ENCODE measurements at regions of chr5 and their contacts with region 1.

Region 1: DNA sequence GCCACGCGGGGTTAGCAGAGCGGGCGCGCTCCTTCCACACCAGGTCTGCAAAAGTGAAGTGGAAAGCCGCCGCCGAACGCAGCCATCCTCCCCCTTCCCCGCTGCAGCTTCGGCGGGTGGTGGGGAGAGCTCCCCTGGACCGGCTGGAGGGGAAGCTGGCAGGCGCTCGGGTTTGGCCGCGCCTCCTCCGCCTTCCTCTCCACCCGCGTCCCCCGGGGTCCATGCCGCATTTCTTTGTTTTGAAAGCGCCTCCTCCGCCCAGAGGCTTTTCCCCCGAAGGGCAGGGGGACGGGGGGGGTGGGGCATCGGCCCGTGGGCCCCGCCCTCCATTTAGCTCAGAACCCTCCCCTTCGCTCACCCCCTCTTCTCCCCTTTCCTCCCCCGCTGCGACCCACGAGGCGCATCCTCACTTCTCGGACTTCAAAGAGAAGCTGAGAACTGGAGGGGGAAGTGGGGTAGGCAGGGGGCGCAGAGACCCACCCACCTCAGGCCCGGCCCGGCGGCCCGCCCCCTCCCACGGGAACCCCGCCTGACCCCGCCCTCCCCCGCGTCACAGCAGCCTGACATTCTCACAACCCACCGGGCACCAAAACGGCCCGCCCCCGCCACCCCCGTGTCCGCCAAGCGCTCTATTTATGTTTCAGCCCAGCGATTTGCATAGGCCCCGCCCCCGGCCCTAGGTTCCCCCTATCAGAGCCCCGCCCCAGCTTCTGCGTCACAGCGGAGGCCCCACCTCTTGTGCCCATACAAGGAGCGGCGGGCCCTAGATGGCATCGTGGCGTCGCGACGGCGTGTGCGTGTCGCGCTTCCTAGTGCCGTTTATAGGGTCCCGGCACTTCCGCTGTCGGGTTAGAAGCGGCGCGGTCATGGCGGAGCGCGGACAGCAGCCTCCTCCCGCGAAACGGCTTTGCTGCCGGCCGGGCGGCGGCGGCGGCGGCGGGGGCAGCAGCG is at the start of gene ZSWIM6:
- DNase-seq: peak; percentile 99 to 100 (median 100)
- H3K4me3 ChIP-seq: peak within 1 kb of the TSS; percentile 79 to 95 (median 89)
- H3K27ac ChIP-seq: peak within 1 kb of the TSS in 1 of 2 experiments; percentile 80
- H3K4me1 ChIP-seq: peaks cover 10 to 43% (median 26%) of the 10 kb centered on the region in 4 experiments
- H3K27me3 ChIP-seq: no peaks in the 10 kb centered on the region

Region 2: DNA sequence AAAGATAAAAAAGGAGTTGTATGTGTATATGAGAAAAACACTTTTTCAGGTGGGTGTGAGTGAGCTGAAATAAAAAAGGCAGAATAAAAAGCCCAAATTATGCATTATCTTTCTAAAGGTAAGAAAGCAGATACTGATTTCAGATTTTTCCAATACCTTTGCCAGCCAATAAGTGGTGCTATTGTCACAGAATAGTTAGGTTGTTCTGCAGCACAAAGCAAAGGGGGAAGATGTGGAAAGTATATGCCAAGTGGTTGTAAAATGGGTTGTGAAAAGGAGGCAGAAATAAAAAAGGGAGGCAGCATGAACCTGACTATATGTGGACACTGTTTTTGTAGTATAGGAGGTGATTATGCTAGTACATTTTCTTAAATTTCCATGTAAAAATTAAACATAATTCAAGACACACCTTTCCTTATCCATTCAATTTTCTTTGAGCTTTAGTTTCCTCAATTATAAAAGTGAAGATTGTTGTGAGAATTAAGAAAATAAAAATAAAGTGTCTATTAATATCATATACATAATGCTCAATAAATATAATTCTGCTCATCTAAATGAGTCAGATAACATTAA is 276.2 kb before region 1 on chr5:
- CTCF ChIA-PET with region 1: interaction called, 17 read pairs
- POLR2A ChIA-PET with region 1: no interaction called
- DNase-seq: peak; percentile 64 to 84 (median 84)
- H3K4me3 ChIP-seq: no peak overlapping the region
- H3K27ac ChIP-seq: no peak overlapping the region
- H3K4me1 ChIP-seq: no peaks in the 10 kb centered on the region
- H3K27me3 ChIP-seq: no peaks in the 10 kb centered on the region

Region 3: DNA sequence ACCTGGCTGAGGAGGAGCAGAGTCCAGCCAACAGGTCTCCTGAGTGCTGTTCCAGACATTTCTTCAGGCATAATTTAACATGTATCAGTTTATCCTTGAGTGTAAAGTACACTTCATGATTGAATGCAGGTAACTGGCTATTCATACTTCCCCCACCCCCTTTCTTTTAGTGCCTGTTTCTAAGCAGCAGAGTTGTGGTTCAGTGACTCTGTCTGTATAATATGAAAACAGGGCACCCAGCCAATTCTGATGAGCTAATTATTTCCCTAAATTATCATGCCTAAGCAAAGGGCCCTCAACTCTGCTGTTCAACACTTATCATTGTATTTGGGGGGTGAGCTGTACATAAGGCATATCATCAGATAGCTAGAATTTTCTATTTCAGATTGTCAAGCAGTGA is 51.5 kb before region 1 on chr5:
- CTCF ChIA-PET with region 1: interaction called, 19 read pairs
- POLR2A ChIA-PET with region 1: interaction called, 13 read pairs
- DNase-seq: peak; percentile 77 to 92 (median 91)
- H3K4me3 ChIP-seq: peak overlapping the region in 1 of 7 experiments; percentile 20
- H3K27ac ChIP-seq: no peak overlapping the region
- H3K4me1 ChIP-seq: peaks cover 3 to 43% (median 38%) of the 10 kb centered on the region in 4 experiments
- H3K27me3 ChIP-seq: no peaks in the 10 kb centered on the region

Region 4: DNA sequence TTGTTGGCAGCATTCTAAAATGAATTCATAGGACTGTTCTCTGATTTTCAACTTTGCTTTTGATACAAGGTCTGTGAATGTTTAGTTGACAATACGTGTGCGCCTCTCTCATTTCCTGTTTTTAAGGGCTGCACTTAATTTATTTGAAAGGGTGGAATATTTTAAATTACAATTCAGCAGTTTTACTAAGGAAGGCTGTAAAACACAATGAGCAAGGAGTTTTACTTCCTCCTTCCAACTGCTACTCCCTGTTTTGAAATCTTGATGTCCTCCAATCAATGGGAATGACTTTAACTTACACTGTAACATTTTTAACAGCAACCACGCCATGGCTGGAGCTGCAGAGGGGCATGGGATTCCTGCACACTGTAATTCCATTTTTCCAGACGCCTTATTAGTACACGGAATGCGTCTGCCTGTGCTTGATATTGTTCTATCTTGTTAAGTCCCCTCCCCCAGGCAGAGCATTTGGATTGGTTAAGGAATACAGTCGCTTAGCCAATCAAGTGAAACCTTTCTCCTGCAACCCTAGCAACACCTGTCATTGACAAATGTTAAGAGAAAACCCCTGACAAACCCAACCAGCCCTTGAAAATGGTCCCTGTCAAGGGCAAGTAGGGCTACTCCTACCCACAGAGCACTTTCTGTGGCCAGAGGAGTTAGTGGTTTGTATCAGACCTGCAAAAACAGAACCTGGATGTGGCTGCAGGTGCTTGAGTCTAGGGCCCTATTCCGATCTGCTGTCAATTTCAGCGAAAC is 12.1 kb before region 1 on chr5:
- CTCF ChIA-PET with region 1: interaction called, 14 read pairs
- POLR2A ChIA-PET with region 1: interaction called, 15 read pairs
- DNase-seq: peak; percentile 67 to 92 (median 90)
- H3K4me3 ChIP-seq: peak overlapping the region in 5 of 7 experiments; percentile 8 to 61 (median 37)
- H3K27ac ChIP-seq: peak overlapping the region; percentile 71 to 82
- H3K4me1 ChIP-seq: peaks cover 9 to 36% (median 28%) of the 10 kb centered on the region in 4 experiments
- H3K27me3 ChIP-seq: no peaks in the 10 kb centered on the region

Region 5: GRCh38 chr5:61357745-61358144 is 26.1 kb after region 1 on chr5:
- CTCF ChIA-PET with region 1: interaction called, 10 read pairs
- POLR2A ChIA-PET with region 1: interaction called, 9 read pairs
- DNase-seq: peak; percentile 31 to 65 (median 63)
- H3K4me3 ChIP-seq: no peak overlapping the region
- H3K27ac ChIP-seq: no peak overlapping the region
- H3K4me1 ChIP-seq: no peaks in the 10 kb centered on the region
- H3K27me3 ChIP-seq: no peaks in the 10 kb centered on the region

Region 6: GRCh38 chr5:61617995-61618525 is 286.4 kb after region 1 on chr5:
- CTCF ChIA-PET with region 1: no interaction called
- POLR2A ChIA-PET with region 1: no interaction called
- DNase-seq: no peak
- H3K4me3 ChIP-seq: no peak overlapping the region
- H3K27ac ChIP-seq: no peak overlapping the region
- H3K4me1 ChIP-seq: no peaks in the 10 kb centered on the region
- H3K27me3 ChIP-seq: no peaks in the 10 kb centered on the region

Measured in common myeloid progenitor, CD34-positive (primary cell).